ENCODE measurements at regions of chr5 and their contacts with region 1.

Region 1: GRCh38 chr5:6632917-6633468 is at the starts of genes NSUN2 and SRD5A1:
- DNase-seq: peak; percentile 88 to 89
- H3K4me3 ChIP-seq: peak within 1 kb of the TSS; percentile 70 to 94 (median 78)
- H3K27ac ChIP-seq: peak within 1 kb of the TSS; percentile 91 to 96 (median 96)
- H3K4me1 ChIP-seq: peaks cover 7 to 12% of the 10 kb centered on the region in 2 donors
- H3K27me3 ChIP-seq: no peaks in the 10 kb centered on the region
- CTCF ChIP-seq: no peak
- POLR2A ChIP-seq: peak in 1 of 2 donors; percentile 51
- total RNA-seq, gene NSUN2: 34.1 to 49.6 (median 41.9) TPM
- total RNA-seq, gene SRD5A1: 3.0 to 7.5 (median 5.0) TPM

Region 2: DNA sequence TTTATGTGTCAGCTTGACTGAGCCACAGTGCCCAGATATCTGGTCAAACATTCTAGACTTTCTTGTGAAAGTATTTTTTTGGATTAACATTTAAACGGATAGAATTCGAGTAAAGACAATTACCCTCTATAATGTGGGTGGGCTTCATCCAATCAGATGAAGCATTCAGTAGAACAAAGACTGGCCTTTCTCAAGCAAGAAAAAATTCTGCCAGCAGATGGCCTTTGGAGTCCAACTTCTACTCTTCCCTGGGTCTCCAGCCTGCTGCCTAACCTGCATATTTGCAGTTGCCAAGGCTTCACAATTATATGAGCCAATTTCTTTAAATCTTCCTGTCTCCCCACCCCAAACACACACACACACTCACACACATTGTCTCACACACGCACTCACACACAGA is 341.0 kb before region 1 on chr5:
- intact Hi-C with region 1: no loop called
- DNase-seq: no peak
- H3K4me3 ChIP-seq: no peak overlapping the region
- H3K27ac ChIP-seq: no peak overlapping the region
- H3K4me1 ChIP-seq: no peaks in the 10 kb centered on the region
- H3K27me3 ChIP-seq: no peaks in the 10 kb centered on the region
- CTCF ChIP-seq: peak in 1 of 6 experiments; percentile 22
- POLR2A ChIP-seq: no peak

Region 3: GRCh38 chr5:6504677-6505411 is 128.1 kb before region 1 on chr5:
- intact Hi-C with region 1: no loop called
- DNase-seq: no peak
- H3K4me3 ChIP-seq: no peak overlapping the region
- H3K27ac ChIP-seq: no peak overlapping the region
- H3K4me1 ChIP-seq: peaks cover 0 to 10% of the 10 kb centered on the region in 2 donors
- H3K27me3 ChIP-seq: no peaks in the 10 kb centered on the region
- CTCF ChIP-seq: no peak
- POLR2A ChIP-seq: no peak

Region 4: GRCh38 chr5:6714221-6715041 is 81.4 kb after region 1 on chr5:
- intact Hi-C with region 1: loop called (anchors 5 kb)
- DNase-seq: peak; percentile 37 to 49
- H3K4me3 ChIP-seq: peak overlapping the region; percentile 38 to 59 (median 44)
- H3K27ac ChIP-seq: peak overlapping the region in 1 of 3 donors; percentile 45
- H3K4me1 ChIP-seq: peaks cover 31 to 44% of the 10 kb centered on the region in 2 donors
- H3K27me3 ChIP-seq: no peaks in the 10 kb centered on the region
- CTCF ChIP-seq: no peak
- POLR2A ChIP-seq: no peak

Region 5: GRCh38 chr5:6745706-6746222 is 112.8 kb after region 1 on chr5:
- intact Hi-C with region 1: loop called (anchors 10 kb)
- DNase-seq: no peak
- H3K4me3 ChIP-seq: no peak overlapping the region
- H3K27ac ChIP-seq: no peak overlapping the region
- H3K4me1 ChIP-seq: no peaks in the 10 kb centered on the region
- H3K27me3 ChIP-seq: no peaks in the 10 kb centered on the region
- CTCF ChIP-seq: peak; percentile 37 to 75 (median 64)
- POLR2A ChIP-seq: no peak

Region 6: DNA sequence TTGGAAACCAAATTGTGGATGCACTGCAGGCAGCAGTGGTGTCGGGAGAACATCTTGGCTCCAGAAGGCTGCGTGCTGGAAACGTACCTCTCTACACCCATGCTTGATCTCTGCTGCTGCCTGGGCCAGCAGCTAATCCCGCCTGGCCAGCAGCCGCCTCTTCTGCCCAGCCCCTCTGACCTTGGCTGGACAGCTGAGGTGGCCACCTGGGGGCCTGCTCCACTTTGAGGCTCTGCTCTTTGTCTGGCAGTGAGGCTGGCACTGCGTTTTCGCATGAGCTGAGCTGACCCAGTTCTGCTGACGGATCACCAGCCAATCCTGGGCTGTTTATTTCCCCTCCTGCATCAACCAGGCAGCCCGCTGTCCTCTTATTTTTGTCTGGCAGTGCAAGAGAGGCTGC is 235.2 kb after region 1 on chr5:
- intact Hi-C with region 1: no loop called
- DNase-seq: no peak
- H3K4me3 ChIP-seq: no peak overlapping the region
- H3K27ac ChIP-seq: no peak overlapping the region
- H3K4me1 ChIP-seq: no peaks in the 10 kb centered on the region
- H3K27me3 ChIP-seq: no peaks in the 10 kb centered on the region
- CTCF ChIP-seq: no peak
- POLR2A ChIP-seq: no peak